ENCODE measurements at regions of chr12 and their contacts with region 1.

Region 1: DNA sequence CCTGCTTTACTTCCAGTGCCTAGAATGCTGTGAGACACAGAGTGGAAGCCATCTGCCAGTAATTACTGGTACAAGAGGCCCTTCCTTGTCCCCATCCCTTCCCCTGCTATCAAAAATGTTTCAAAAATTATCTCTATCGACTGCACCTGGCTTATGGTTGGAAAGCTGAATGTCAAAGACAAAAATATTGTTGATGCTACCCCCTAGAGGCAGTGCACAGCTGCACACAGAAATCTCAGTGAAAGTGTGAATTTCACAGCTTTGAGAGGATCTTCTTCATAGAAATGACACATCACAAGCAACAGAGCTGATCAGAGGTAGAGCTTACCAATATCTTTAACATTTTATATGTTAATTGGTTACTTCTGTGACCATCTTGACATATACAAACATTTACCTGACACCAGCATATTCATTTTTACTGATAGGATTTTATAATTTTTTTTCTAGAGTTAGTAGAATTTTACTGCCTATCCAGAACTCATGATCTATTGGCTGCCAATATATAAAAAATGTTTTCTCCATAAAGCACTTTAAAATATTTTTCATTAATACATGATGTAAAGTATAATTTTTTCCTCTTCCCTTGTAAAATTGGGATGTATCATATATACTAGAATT is 138.0 kb downstream of the AACS start:
- DNase-seq: no peak
- H3K4me3 ChIP-seq: no peak overlapping the region
- H3K27ac ChIP-seq: no peak overlapping the region
- H3K4me1 ChIP-seq: peaks cover 0 to 7% (median 3%) of the 10 kb centered on the region in 4 experiments; a peak in 4 of 7 replicates
- H3K27me3 ChIP-seq: no peaks in the 10 kb centered on the region
- CTCF ChIP-seq: peak in 2 of 3 experiments; percentile 22 to 53; a peak in 2 of 4 replicates
- EP300 ChIP-seq: no peak
- POLR2A ChIP-seq: no peak
- RAD21 ChIP-seq: peak in 1 of 2 experiments; percentile 13; a peak in 1 of 4 replicates

Region 2: DNA sequence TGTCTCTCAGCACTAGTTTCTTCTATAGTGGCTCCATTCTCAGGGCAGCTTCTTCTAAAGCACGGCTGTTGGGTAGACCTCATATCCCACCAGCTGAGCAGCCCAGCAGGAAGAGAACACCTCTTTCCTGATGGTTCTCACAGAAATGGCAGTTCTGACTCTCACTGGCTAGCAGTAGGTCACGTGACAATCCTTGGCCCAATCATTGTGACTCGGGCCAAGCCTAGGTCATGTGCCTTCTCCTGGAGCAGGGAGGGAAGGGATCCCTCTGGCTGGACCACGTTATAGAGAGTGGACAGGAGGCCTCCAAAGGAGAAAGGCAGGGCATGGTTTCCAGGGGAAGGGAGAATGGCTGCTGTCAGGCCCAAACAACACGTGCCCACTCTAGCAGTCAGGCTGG is 11.0 kb after region 1 on chr12:
- CTCF ChIA-PET with region 1: interaction called, 46 read pairs
- POLR2A ChIA-PET with region 1: interaction called, 7 read pairs
- DNase-seq: no peak
- H3K4me3 ChIP-seq: no peak overlapping the region
- H3K27ac ChIP-seq: no peak overlapping the region
- H3K4me1 ChIP-seq: peaks cover 0 to 11% (median 3%) of the 10 kb centered on the region in 4 experiments; a peak in 6 of 7 replicates
- H3K27me3 ChIP-seq: no peaks in the 10 kb centered on the region
- CTCF ChIP-seq: no peak
- EP300 ChIP-seq: no peak
- POLR2A ChIP-seq: no peak
- RAD21 ChIP-seq: no peak

Region 3: DNA sequence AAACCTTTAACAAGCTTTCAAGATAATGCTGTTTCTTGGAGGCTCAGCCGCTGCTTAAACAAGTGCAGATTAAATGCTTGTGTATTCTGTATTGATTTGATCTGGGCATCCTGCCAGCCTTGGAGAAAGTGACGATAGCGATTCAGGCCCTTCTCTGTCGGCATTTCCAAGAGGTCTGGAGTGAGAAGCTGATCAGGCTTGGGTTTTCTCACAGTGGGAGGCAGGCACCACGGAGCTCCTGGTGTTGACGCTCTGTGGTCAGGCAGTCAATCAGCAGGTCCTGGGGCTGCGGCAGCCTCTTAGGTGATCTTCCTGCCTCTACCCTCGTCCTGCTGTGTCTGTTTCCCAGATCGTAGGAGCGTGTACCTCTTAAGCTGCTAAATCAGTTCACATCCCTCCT is 17.1 kb after region 1 on chr12:
- CTCF ChIA-PET with region 1: interaction called, 46 read pairs
- POLR2A ChIA-PET with region 1: interaction called, 3 read pairs
- DNase-seq: no peak
- H3K4me3 ChIP-seq: no peak overlapping the region
- H3K27ac ChIP-seq: no peak overlapping the region
- H3K4me1 ChIP-seq: peaks cover 0 to 3% (median 0%) of the 10 kb centered on the region in 4 experiments; a peak in 2 of 7 replicates
- H3K27me3 ChIP-seq: no peaks in the 10 kb centered on the region
- CTCF ChIP-seq: no peak
- EP300 ChIP-seq: no peak
- POLR2A ChIP-seq: no peak
- RAD21 ChIP-seq: no peak

Region 4: GRCh38 chr12:125247477-125247876 is 44.2 kb after region 1 on chr12:
- CTCF ChIA-PET with region 1: no interaction called
- POLR2A ChIA-PET with region 1: no interaction called
- DNase-seq: no peak
- H3K4me3 ChIP-seq: no peak overlapping the region
- H3K27ac ChIP-seq: no peak overlapping the region
- H3K4me1 ChIP-seq: peaks cover 2 to 8% (median 6%) of the 10 kb centered on the region in 4 experiments; a peak in 6 of 7 replicates
- H3K27me3 ChIP-seq: no peaks in the 10 kb centered on the region
- CTCF ChIP-seq: no peak
- EP300 ChIP-seq: no peak
- POLR2A ChIP-seq: no peak
- RAD21 ChIP-seq: no peak

Measured in H1 (cell line).